ENCODE measurements at regions of chr5 and their contacts with region 1.

Region 1: GRCh38 chr5:179265514-179266290 is 79.6 kb downstream of the ADAMTS2 start:
- DNase-seq: peak; percentile 94 to 97 (median 96)
- H3K4me3 ChIP-seq: no peak overlapping the region
- H3K27ac ChIP-seq: peak overlapping the region; percentile 60 to 64
- H3K4me1 ChIP-seq: peaks cover 47% of the 10 kb centered on the region
- H3K27me3 ChIP-seq: no peaks in the 10 kb centered on the region
- CTCF ChIP-seq: no peak
- EP300 ChIP-seq: peak; percentile 63
- POLR2A ChIP-seq: no peak

Region 2: DNA sequence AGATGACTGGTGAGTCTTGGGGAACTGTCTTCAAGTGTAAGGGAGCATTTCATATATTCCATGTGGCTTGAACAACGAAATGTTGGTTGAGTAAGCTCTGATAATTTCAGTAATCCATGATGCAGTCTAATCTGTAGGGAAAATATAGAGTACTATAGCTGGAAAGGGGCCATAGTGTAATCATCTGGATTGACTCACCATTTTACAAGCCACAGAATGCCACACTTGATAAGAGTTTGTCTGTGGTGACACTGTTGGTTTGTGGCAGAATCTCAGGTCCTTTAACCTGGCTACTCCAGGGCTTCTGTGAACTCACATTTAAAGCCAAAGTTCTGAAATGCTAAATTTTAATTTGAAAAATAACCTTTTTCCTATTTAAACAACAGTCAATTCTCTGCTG is 450.6 kb after region 1 on chr5:
- intact Hi-C with region 1: no loop called
- DNase-seq: no peak
- H3K4me3 ChIP-seq: no peak overlapping the region
- H3K27ac ChIP-seq: no peak overlapping the region
- H3K4me1 ChIP-seq: no peaks in the 10 kb centered on the region
- H3K27me3 ChIP-seq: no peaks in the 10 kb centered on the region
- CTCF ChIP-seq: no peak
- EP300 ChIP-seq: no peak
- POLR2A ChIP-seq: no peak

Region 3: GRCh38 chr5:179763215-179763945 is 497.7 kb after region 1 on chr5:
- intact Hi-C with region 1: loop called in 1 of 4 experiments (anchors 5 kb)
- DNase-seq: peak; percentile 55 to 81 (median 68)
- H3K4me3 ChIP-seq: no peak overlapping the region
- H3K27ac ChIP-seq: no peak overlapping the region
- H3K4me1 ChIP-seq: peaks cover 2% of the 10 kb centered on the region
- H3K27me3 ChIP-seq: no peaks in the 10 kb centered on the region
- CTCF ChIP-seq: peak; percentile 58 to 88 (median 87)
- EP300 ChIP-seq: no peak
- POLR2A ChIP-seq: no peak

Measured in ovary (tissue), 10 donors.